ENCODE measurements at regions of chr1 and their contacts with region 1.

Region 1: DNA sequence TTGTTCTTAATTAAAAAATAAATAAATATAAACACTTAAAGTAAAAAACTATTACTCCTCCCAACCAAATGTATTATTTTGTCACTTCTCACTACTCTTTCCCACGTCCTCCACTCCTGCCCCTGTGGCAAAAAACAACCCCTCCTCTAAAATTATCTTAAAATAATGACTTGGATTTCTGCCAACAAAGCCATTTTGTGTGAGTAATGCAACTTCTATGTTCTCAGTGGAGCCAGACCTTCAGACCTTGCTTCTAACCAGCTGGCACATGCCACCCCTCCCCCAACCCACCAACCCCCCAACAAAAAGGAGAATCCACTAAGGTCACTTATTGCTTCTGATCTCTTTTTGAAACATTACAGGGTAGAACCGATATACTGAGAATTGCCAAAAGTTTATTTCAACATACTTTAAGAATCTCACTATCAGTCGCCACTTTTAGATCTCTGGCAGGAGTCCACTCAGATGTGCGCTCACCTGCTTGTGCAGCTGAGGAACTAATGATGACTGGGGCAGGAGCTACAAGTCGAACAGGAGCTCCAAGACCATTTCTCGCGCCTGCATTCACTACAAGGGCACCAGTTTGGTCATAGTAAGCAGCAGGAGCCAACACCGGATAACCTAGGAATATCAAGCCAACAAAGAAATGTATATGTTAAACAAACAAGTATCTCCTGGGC is 58.3 kb upstream of the SDC3 start:
- DNase-seq: no peak

Region 2: GRCh38 chr1:31027693-31028526 is 61.1 kb after region 1 on chr1:
- intact Hi-C with region 1: loop called (anchors 5 kb)
- DNase-seq: no peak

Region 3: DNA sequence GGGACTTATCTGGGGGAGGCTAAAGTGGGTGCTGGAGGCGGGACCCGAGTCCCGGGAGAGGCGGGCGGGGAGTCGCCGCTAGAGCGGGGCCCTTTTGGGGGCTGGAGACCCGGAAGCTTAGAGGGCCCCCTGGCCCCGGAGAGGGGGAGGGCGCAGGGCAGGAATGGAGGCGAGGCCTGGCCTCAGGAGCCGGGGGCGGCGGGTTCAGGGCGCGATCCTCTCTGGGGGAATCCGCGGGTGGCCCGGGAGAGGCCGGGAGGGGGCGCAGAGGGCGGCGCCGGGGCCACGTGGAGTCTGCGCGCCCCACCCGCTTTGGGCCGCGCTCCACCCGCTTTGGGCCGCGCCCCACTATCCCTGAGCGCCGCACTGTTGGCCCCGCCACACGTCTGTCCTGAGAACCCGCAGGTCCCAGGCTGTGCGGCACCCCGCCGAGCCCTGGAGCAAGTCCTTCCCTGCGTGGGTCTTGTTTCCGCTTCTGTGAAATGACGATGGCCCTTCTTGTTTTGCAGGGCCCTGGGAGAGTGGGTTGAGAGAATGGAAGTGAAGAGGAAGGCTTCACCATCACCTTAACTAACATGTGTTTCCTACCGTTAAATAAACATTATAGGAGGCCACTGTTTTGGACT is 188.5 kb after region 1 on chr1:
- intact Hi-C with region 1: loop called (anchors 5 kb)
- DNase-seq: peak; percentile 75

Measured in cardiac septum (tissue), 1 donor.